ENCODE measurements at regions of chr2 and their contacts with region 1.

Region 1: GRCh38 chr2:11344342-11344955 is at the start of gene ROCK2:
- DNase-seq: peak; percentile 86 to 93
- H3K4me3 ChIP-seq: peak within 1 kb of the TSS; percentile 91 to 100
- H3K27ac ChIP-seq: peak within 1 kb of the TSS; percentile 97 to 99
- H3K4me1 ChIP-seq: peaks cover 0 to 37% (median 14%) of the 10 kb centered on the region in 4 donors
- H3K27me3 ChIP-seq: no peaks in the 10 kb centered on the region
- CTCF ChIP-seq: no peak

Region 2: DNA sequence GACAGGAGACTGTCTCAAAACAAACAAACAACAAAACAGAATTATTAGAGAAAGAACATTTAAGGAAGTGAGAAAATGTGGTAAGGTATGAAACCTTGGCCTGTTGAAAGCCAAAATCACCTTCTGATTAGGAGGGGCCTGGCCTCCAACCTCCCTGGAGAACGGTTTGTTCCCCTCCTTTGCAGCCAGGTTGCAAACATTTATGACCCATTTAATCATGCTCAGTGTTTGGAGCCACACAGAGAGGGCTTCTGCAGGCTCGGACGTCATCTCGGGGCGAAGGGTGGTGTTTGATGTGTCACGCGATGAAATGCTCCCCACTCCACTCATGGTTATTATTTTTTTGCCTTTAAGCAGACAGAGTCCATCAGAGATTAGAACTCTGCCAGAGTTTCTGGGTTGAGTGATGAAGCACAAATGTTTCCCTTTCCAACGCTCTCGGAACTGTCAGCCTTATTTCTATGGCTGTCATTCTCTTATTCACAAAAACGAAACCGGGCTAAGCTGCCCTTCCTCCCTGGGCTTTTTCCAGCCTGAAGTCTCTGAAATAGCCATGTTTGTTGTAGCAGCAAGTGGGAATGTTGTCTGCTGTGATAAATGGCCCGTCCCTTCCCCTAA is 33.6 kb after region 1 on chr2:
- intact Hi-C with region 1: loop called (anchors 2 kb)
- DNase-seq: peak; percentile 49 to 89
- H3K4me3 ChIP-seq: peak overlapping the region; percentile 18 to 28
- H3K27ac ChIP-seq: peak overlapping the region; percentile 90 to 93
- H3K4me1 ChIP-seq: peaks cover 4 to 72% (median 38%) of the 10 kb centered on the region in 4 donors
- H3K27me3 ChIP-seq: no peaks in the 10 kb centered on the region
- CTCF ChIP-seq: no peak

Region 3: GRCh38 chr2:11405599-11406266 is 61.3 kb after region 1 on chr2:
- intact Hi-C with region 1: loop called (anchors 2 kb)
- DNase-seq: no peak
- H3K4me3 ChIP-seq: peak overlapping the region; percentile 27 to 38
- H3K27ac ChIP-seq: peak overlapping the region; percentile 77 to 86
- H3K4me1 ChIP-seq: peaks cover 0 to 70% (median 33%) of the 10 kb centered on the region in 4 donors
- H3K27me3 ChIP-seq: no peaks in the 10 kb centered on the region
- CTCF ChIP-seq: no peak

Region 4: GRCh38 chr2:11812466-11813248 is 468.2 kb after region 1 on chr2:
- intact Hi-C with region 1: no loop called
- DNase-seq: no peak
- H3K4me3 ChIP-seq: no peak overlapping the region
- H3K27ac ChIP-seq: no peak overlapping the region
- H3K4me1 ChIP-seq: peaks cover 0 to 7% (median 0%) of the 10 kb centered on the region in 4 donors
- H3K27me3 ChIP-seq: no peaks in the 10 kb centered on the region
- CTCF ChIP-seq: no peak

Region 5: GRCh38 chr2:12120281-12121150 is 776.1 kb after region 1 on chr2:
- intact Hi-C with region 1: no loop called
- DNase-seq: no peak
- H3K4me3 ChIP-seq: no peak overlapping the region
- H3K27ac ChIP-seq: no peak overlapping the region
- H3K4me1 ChIP-seq: peaks cover 0 to 10% (median 4%) of the 10 kb centered on the region in 4 donors
- H3K27me3 ChIP-seq: no peaks in the 10 kb centered on the region
- CTCF ChIP-seq: no peak